HAP-1 (cell line): ENCODE measurements at regions of chrX and their contacts with region 1.

Region 1: GRCh38 chrX:12814420-12814819 is 23.2 kb downstream of the PRPS2 start:
- DNase-seq: peak; percentile 49 to 63
- H3K4me3 ChIP-seq: no peak overlapping the region
- H3K4me1 ChIP-seq: peaks cover 8% of the 10 kb centered on the region
- H3K27me3 ChIP-seq: no peaks in the 10 kb centered on the region

Region 2: GRCh38 chrX:12421918-12422317 is 392.5 kb before region 1 on chrX:
- in situ Hi-C with region 1: no loop called
- DNase-seq: peak in 1 of 2 experiments; percentile 40
- H3K4me3 ChIP-seq: no peak overlapping the region
- H3K4me1 ChIP-seq: peaks cover 13% of the 10 kb centered on the region
- H3K27me3 ChIP-seq: no peaks in the 10 kb centered on the region

Region 3: GRCh38 chrX:12894074-12895030 is 79.9 kb after region 1 on chrX:
- in situ Hi-C with region 1: loop called (anchors 10 kb)
- DNase-seq: peak; percentile 32 to 65
- H3K4me3 ChIP-seq: no peak overlapping the region
- H3K4me1 ChIP-seq: no peaks in the 10 kb centered on the region
- H3K27me3 ChIP-seq: 0 out of 2 replicates have a peak, but pooled peaks cover 3% of the 10 kb centered on the region

Region 4: GRCh38 chrX:13487731-13488523 is 673.5 kb after region 1 on chrX:
- in situ Hi-C with region 1: loop called (anchors 25 kb)
- DNase-seq: peak; percentile 77 to 83
- H3K4me3 ChIP-seq: no peak overlapping the region
- H3K4me1 ChIP-seq: peaks cover 11% of the 10 kb centered on the region
- H3K27me3 ChIP-seq: no peaks in the 10 kb centered on the region